HEK293 (cell line): ENCODE measurements at regions of chr6 and their contacts with region 1.

Region 1: GRCh38 chr6:96897383-96898240 is at the start of gene NDUFAF4:
- H3K4me3 ChIP-seq: peak within 1 kb of the TSS; percentile 92
- H3K27ac ChIP-seq: peak within 1 kb of the TSS; percentile 63
- H3K4me1 ChIP-seq: no peaks in the 10 kb centered on the region
- CTCF ChIP-seq: peak; percentile 95

Region 2: GRCh38 chr6:96537726-96538125 is 359.9 kb before region 1 on chr6:
- CTCF ChIA-PET with region 1: no interaction called
- POLR2A ChIA-PET with region 1: no interaction called
- H3K4me3 ChIP-seq: no peak overlapping the region
- H3K27ac ChIP-seq: no peak overlapping the region
- H3K4me1 ChIP-seq: no peaks in the 10 kb centered on the region
- CTCF ChIP-seq: no peak

Region 3: DNA sequence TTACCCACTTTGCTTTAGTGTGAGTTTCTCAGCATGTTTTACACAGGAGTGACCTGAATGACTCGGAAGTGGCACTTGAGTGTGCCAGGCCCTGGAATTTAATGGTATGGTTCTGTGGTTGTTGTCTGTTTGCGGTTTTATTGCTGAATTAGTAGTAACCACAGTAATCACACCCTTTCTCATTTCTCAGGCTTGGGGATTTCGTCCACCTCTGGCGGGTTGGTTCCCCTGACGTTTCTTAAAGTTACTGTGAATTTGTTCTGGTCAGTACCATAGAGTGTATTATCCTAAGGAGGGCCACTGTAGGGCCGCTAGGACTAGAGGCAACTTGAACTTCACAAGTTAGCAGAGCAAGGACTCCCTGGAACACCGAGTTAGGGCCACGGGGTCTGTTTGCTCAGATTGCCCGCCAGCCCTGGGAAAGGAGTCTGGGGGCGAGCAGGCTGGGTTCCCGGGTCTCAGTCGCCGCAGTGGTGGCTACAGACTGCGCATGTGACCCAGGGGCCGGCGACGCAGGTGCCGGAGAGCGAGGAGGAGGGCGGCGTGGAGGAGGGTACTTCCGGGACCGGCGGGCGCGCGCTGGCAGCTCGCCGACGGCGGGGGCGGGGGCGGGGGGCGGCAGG is 26.4 kb after region 1 on chr6:
- CTCF ChIA-PET with region 1: interaction called, 23 read pairs
- POLR2A ChIA-PET with region 1: interaction called, 4 read pairs
- H3K4me3 ChIP-seq: peak overlapping the region; percentile 81
- H3K27ac ChIP-seq: peak overlapping the region; percentile 55; the same call in 1 of the 2 replicates
- H3K4me1 ChIP-seq: peaks cover 5% of the 10 kb centered on the region; the same call in 1 of the 2 replicates
- CTCF ChIP-seq: no peak

Region 4: GRCh38 chr6:97059473-97059872 is 161.9 kb after region 1 on chr6:
- CTCF ChIA-PET with region 1: interaction called, 76 read pairs
- POLR2A ChIA-PET with region 1: no interaction called
- H3K4me3 ChIP-seq: no peak overlapping the region
- H3K27ac ChIP-seq: no peak overlapping the region
- H3K4me1 ChIP-seq: no peaks in the 10 kb centered on the region
- CTCF ChIP-seq: peak; percentile 14; the same call in 1 of the 2 replicates

Region 5: GRCh38 chr6:97150932-97151331 is 253.3 kb after region 1 on chr6:
- CTCF ChIA-PET with region 1: no interaction called
- POLR2A ChIA-PET with region 1: no interaction called
- H3K4me3 ChIP-seq: no peak overlapping the region
- H3K27ac ChIP-seq: no peak overlapping the region
- H3K4me1 ChIP-seq: no peaks in the 10 kb centered on the region
- CTCF ChIP-seq: no peak

Region 6: GRCh38 chr6:97677626-97678025 is 780.0 kb after region 1 on chr6:
- CTCF ChIA-PET with region 1: no interaction called
- POLR2A ChIA-PET with region 1: no interaction called
- H3K4me3 ChIP-seq: no peak overlapping the region
- H3K27ac ChIP-seq: no peak overlapping the region
- H3K4me1 ChIP-seq: no peaks in the 10 kb centered on the region
- CTCF ChIP-seq: no peak